ENCODE measurements at regions of chr5 and their contacts with region 1.

Region 1: DNA sequence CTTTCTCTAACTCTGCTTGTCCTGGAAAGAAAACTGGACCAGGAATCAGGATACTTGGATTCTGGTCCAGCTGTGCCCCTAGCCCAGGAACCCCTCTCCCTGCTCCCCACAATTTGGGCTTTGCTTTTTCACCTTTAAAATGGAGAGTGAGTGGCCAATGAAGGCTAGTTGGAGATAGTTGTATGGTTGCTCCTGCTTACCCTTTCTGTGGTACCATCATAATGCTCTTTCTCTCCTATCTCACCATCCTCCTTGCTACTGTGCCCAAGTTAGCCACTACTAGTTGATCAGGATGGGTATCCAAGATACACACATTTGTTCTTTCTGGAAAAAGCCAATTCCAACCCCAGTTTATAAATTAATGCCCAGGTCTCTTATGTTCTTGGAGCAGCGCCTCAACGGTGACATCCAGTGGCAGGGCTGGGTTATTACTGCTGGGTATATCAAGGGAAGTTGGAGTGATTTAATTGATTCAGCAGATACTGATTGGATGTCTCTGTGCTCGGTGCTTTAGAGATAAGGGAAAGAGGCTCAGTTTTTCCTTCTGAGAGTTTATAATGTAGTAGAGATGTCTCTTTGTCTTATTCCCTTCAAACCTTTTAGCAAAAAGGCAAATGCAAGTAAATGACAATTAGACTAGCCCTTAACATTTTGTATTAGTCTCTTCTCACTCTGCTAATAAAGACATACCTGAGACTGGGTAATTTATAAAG is 38.6 kb downstream of the FAXDC2 start:
- DNase-seq: peak; percentile 44 to 81 (median 77)
- ATAC-seq: peak; percentile 42 to 63
- H3K4me3 ChIP-seq: no peak overlapping the region
- H3K27ac ChIP-seq: no peak overlapping the region
- H3K4me1 ChIP-seq: no peaks in the 10 kb centered on the region
- H3K27me3 ChIP-seq: no peaks in the 10 kb centered on the region

Region 2: DNA sequence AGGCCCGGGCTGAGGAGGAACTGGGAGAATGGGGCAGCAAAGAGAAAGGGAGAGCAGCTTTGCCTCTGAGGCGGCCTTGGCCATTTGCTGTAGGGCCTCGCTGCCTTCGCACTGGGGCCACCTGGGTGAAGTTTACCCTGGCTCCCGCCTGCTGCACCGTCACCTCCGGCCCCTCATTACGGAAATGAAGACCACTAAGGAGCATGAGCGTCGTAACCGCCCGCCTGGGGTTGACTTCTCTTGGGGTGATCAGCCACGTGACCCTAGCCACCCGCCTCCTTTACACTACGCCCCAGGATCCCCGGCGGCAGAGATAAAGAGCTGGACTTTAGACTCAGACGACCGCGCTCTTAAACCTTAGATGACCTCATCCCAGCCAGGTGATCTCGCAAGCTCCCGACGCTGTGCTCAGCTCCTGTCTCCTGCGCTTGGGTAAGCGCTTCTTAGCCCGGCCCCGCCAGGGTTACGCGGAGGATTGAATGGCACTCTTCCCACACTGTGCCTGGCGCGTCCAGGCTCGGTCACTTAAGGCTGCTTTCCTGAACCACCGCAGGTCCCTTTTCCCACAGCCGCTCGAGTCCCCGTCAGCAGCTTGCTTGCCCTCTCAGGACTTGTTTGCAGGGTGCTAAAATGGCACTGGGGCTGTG is 164.6 kb before region 1 on chr5:
- intact Hi-C with region 1: loop called in 2 of 4 experiments (anchors 2 to 5 kb)
- DNase-seq: peak; percentile 43 to 79 (median 67)
- ATAC-seq: peak; percentile 69 to 73
- H3K4me3 ChIP-seq: peak overlapping the region; percentile 46
- H3K27ac ChIP-seq: no peak overlapping the region
- H3K4me1 ChIP-seq: no peaks in the 10 kb centered on the region
- H3K27me3 ChIP-seq: no peaks in the 10 kb centered on the region

Region 3: DNA sequence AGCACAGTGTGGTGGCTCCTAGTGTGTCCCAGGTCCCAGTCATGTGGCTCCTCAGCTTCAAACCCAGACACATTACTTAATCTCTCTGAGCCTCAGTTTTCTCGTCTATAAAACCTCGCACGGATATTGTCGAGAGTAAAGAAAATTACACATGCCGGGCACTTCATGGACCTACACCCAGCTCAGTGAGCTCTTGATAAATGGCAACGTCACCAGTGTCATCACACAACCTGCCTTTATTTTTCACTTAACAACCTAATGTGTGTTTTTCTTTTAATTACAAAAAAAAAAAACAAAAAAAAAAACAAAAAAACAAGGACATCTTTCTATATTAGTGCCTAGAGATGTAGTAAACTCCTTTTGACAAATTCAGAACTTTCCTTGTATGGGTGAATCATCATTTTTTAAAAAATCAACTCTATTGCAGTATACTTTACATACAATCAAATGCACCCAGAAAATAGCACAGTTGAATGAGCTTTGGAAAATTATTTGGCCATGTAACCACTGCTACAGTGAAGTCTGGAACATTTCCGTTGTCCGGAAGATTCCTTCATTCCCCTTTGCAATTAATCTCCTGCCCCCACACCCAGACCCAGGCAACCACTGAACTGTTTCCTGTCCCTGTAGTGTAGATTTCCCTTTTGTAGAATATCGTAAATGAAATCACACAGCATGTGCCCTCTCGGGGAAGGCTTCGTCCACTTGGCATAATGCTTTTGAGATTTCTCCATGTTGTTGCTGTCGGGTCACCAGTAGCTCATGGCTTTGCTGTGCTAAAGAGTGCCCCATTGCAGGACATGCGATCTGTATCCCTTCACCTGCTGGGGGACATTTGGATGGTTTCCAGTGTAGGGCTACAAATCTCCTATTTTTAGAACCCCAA is 157.1 kb before region 1 on chr5:
- intact Hi-C with region 1: loop called in 3 of 4 experiments (anchors 2 to 5 kb)
- DNase-seq: no peak
- ATAC-seq: peak; percentile 12 to 28
- H3K4me3 ChIP-seq: peak overlapping the region; percentile 0
- H3K27ac ChIP-seq: peak overlapping the region; percentile 61
- H3K4me1 ChIP-seq: peaks cover 8% of the 10 kb centered on the region
- H3K27me3 ChIP-seq: no peaks in the 10 kb centered on the region

Measured in right cardiac atrium (tissue), 5 donors.